H1 (cell line): ENCODE measurements at regions of chr5 and their contacts with region 1.

Region 1: GRCh38 chr5:40828690-40829661 is 6.0 kb downstream of the RPL37 start:
- DNase-seq: no peak
- H3K4me3 ChIP-seq: no peak overlapping the region
- H3K27ac ChIP-seq: no peak overlapping the region
- H3K4me1 ChIP-seq: peaks cover 0 to 7% (median 1%) of the 10 kb centered on the region in 4 experiments; a peak in 2 of 7 replicates
- H3K27me3 ChIP-seq: no peaks in the 10 kb centered on the region
- CTCF ChIP-seq: no peak
- EP300 ChIP-seq: no peak
- POLR2A ChIP-seq: peak; percentile 74 to 93
- RAD21 ChIP-seq: no peak

Region 2: DNA sequence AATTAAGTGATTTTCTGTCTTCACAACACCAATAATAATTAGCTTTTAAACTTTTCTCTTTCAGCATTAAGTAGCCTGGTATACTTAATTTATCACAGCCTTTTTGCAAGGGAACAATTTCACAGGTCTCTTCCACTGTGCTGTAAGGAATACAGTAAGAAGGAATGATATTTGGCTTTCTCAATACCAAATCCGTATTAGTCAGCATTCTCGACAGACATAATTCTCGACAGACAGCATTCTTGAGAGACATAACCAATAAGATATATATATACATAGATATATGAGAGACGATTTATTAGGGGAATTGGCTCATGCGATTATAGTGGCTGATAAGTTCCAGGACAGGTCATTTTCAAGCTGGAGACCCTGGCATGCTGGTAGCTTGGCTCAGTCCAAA is 48.8 kb before region 1 on chr5:
- CTCF ChIA-PET with region 1: no interaction called
- POLR2A ChIA-PET with region 1: interaction called, 23 read pairs
- DNase-seq: no peak
- H3K4me3 ChIP-seq: no peak overlapping the region
- H3K27ac ChIP-seq: no peak overlapping the region
- H3K4me1 ChIP-seq: no peaks in the 10 kb centered on the region
- H3K27me3 ChIP-seq: no peaks in the 10 kb centered on the region
- CTCF ChIP-seq: no peak
- EP300 ChIP-seq: no peak
- POLR2A ChIP-seq: no peak
- RAD21 ChIP-seq: no peak